Right cardiac atrium (tissue), 5 donors: ENCODE measurements at regions of chr2 and their contacts with region 1.

Region 1: DNA sequence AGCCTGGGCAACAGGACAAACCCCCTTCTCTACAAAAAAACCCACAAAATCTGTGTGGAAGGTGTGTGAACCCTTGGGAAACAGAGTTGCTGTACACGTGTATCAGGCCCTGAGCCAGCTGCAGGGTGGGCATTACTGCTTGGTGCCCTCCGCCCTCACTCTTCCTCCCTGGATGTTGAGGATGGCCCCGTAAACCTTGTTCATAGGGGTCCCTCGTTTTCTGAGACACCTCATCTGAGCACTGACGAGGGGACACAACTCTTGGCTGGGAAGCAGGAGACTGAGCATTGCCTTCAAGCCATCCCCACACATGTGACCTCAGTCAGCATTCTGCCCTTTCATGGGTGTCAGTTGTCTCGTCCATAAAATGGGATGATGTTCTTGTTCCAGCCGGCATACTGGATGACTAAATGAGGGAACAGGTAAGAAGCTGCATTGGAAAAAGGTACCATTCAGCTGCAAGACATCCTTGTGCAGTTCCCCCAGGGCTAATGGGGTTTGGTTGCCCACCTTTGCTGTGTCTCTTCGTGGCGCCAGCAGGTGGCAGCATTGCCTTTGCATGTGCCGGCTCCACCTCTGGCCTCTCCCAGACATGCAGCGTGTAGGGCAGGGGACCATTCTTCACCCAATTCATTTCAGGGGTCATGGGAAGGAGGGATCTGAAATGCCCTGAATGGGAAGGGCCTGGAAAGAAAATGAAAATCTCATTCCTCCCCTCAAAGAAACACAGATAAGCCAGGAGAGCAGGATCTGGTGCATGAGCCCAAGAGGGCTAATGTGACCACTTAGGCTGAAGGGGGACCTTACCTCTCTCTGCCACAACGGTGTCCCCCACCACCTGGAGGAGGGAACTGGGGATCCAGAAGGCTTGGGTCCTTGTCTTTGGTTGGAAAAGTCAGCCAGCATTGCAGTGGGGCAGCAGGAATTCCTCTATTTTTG is 36.4 kb upstream of the HAAO start:
- DNase-seq: peak; percentile 79 to 91 (median 91)
- ATAC-seq: peak; percentile 90 to 93
- H3K4me3 ChIP-seq: no peak overlapping the region
- H3K27ac ChIP-seq: no peak overlapping the region
- H3K4me1 ChIP-seq: no peaks in the 10 kb centered on the region
- H3K27me3 ChIP-seq: no peaks in the 10 kb centered on the region

Region 2: GRCh38 chr2:42944779-42945415 is 116.1 kb after region 1 on chr2:
- intact Hi-C with region 1: loop called in 2 of 4 experiments (anchors 10 kb)
- DNase-seq: peak in 1 of 3 donors; percentile 45
- ATAC-seq: no peak
- H3K4me3 ChIP-seq: no peak overlapping the region
- H3K27ac ChIP-seq: no peak overlapping the region
- H3K4me1 ChIP-seq: no peaks in the 10 kb centered on the region
- H3K27me3 ChIP-seq: no peaks in the 10 kb centered on the region

Region 3: GRCh38 chr2:43239981-43240761 is 411.4 kb after region 1 on chr2:
- intact Hi-C with region 1: loop called in 2 of 4 experiments (anchors 10 kb)
- DNase-seq: no peak
- ATAC-seq: peak in 1 of 2 donors; percentile 15
- H3K4me3 ChIP-seq: no peak overlapping the region
- H3K27ac ChIP-seq: peak overlapping the region; percentile 28
- H3K4me1 ChIP-seq: peaks cover 2% of the 10 kb centered on the region
- H3K27me3 ChIP-seq: no peaks in the 10 kb centered on the region

Region 4: GRCh38 chr2:43542285-43542937 is 713.7 kb after region 1 on chr2:
- intact Hi-C with region 1: loop called in 2 of 4 experiments (anchors 10 kb)
- DNase-seq: no peak
- ATAC-seq: peak; percentile 23 to 27
- H3K4me3 ChIP-seq: no peak overlapping the region
- H3K27ac ChIP-seq: no peak overlapping the region
- H3K4me1 ChIP-seq: no peaks in the 10 kb centered on the region
- H3K27me3 ChIP-seq: no peaks in the 10 kb centered on the region